CD8-positive, alpha-beta T cell (primary cell): ENCODE measurements at regions of chr6 and their contacts with region 1.

Region 1: GRCh38 chr6:14876778-14877613 is 368.9 kb upstream of the JARID2 start:
- DNase-seq: peak in 5 of 9 experiments; percentile 14 to 83 (median 19)
- ATAC-seq: peak; percentile 91
- H3K4me3 ChIP-seq: no peak overlapping the region
- H3K4me3 Mint-ChIP-seq: peak overlapping the region; percentile 33
- H3K27ac ChIP-seq: peak overlapping the region in 1 of 2 experiments; percentile 29
- H3K27ac Mint-ChIP-seq: peak overlapping the region; percentile 73
- H3K4me1 ChIP-seq: peaks cover 21% of the 10 kb centered on the region
- H3K4me1 Mint-ChIP-seq: peaks cover 22% of the 10 kb centered on the region
- H3K27me3 ChIP-seq: no peaks in the 10 kb centered on the region
- H3K27me3 Mint-ChIP-seq: no peaks in the 10 kb centered on the region
- CTCF ChIP-seq: no peak

Region 2: GRCh38 chr6:14734416-14735340 is 142.3 kb before region 1 on chr6:
- CTCF ChIA-PET with region 1: no interaction called
- POLR2A ChIA-PET with region 1: no interaction called
- intact Hi-C with region 1: loop called in 1 of 2 experiments (anchors 5 kb)
- DNase-seq: peak in 6 of 9 experiments; percentile 21 to 79 (median 46)
- ATAC-seq: peak; percentile 41
- H3K4me3 ChIP-seq: no peak overlapping the region
- H3K4me3 Mint-ChIP-seq: peak overlapping the region; percentile 51
- H3K27ac ChIP-seq: no peak overlapping the region
- H3K27ac Mint-ChIP-seq: peak overlapping the region; percentile 4
- H3K4me1 ChIP-seq: peaks cover 44% of the 10 kb centered on the region
- H3K4me1 Mint-ChIP-seq: peaks cover 65% of the 10 kb centered on the region
- H3K27me3 ChIP-seq: no peaks in the 10 kb centered on the region
- H3K27me3 Mint-ChIP-seq: no peaks in the 10 kb centered on the region
- CTCF ChIP-seq: no peak

Region 3: DNA sequence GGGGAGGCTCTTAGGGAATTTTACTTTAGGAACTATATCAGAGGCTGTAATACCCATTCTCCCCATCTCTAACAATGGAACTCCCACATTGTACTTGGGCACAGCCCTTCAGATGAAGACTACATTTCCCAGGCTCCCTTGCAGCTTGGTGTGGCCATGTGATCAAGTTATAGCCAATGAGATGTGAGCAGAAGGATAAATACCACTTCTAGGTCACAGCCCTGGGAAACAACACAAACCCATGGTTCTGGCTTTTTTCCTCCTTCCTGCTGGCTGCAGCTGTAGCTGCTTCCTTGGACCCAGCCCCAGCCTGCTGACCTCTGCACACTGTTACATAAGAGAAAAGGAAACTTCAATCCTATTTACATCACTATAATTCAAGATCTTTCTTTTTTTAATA is 77.1 kb before region 1 on chr6:
- CTCF ChIA-PET with region 1: no interaction called
- POLR2A ChIA-PET with region 1: no interaction called
- intact Hi-C with region 1: no loop called
- DNase-seq: peak in 3 of 9 experiments; percentile 26 to 61 (median 51)
- ATAC-seq: peak; percentile 62
- H3K4me3 ChIP-seq: no peak overlapping the region
- H3K4me3 Mint-ChIP-seq: no peak overlapping the region
- H3K27ac ChIP-seq: no peak overlapping the region
- H3K27ac Mint-ChIP-seq: no peak overlapping the region
- H3K4me1 ChIP-seq: no peaks in the 10 kb centered on the region
- H3K4me1 Mint-ChIP-seq: peaks cover 3% of the 10 kb centered on the region
- H3K27me3 ChIP-seq: no peaks in the 10 kb centered on the region
- H3K27me3 Mint-ChIP-seq: no peaks in the 10 kb centered on the region
- CTCF ChIP-seq: no peak